Cardiac septum (tissue), 1 donor: ENCODE measurements at regions of chr17 and their contacts with region 1.

Region 1: GRCh38 chr17:49851387-49852291 is 3.8 kb upstream of the TAC4 start:
- DNase-seq: peak; percentile 89

Region 2: GRCh38 chr17:49707608-49708514 is 143.8 kb before region 1 on chr17 and contains the start of gene SLC35B1:
- intact Hi-C with region 1: loop called (anchors 5 kb)
- DNase-seq: peak; percentile 100
- total RNA-seq, gene SLC35B1: 73.8 TPM